Aorta (tissue), 5 donors: ENCODE measurements at regions of chr10 and their contacts with region 1.

Region 1: DNA sequence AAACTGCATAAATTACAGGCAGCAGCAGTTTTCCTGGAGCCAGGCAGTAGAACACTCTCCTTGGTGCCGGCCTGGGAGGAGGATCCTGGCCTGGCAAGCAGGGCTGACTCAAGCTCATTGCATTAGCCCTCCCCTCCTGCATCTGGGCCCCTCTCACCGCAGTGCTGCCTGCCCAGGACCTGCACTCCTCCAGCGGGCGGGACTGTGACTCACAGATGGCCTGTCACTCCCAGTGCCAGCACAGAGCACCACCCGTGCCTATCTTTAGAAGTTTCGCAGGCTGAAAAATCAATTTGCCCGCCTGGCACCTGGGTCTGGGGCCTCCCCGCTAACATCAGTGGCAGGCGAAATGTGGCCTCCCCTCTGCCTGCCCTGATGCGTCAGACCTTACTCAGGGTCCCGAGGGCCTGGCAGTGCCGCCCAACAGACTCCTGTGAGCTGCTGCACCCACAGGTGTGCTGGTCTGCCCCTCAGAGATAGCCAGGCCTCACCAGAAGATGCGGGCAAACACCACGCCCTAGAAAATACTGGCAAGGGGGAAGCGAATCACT is 123.8 kb downstream of the KCNMA1 start:
- DNase-seq: peak; percentile 90 to 94
- ATAC-seq: peak; percentile 78
- H3K4me3 ChIP-seq: no peak overlapping the region
- H3K27ac ChIP-seq: peak overlapping the region; percentile 6 to 72
- H3K4me1 ChIP-seq: peaks cover 6% of the 10 kb centered on the region in 2 donors
- H3K27me3 ChIP-seq: no peaks in the 10 kb centered on the region

Region 2: DNA sequence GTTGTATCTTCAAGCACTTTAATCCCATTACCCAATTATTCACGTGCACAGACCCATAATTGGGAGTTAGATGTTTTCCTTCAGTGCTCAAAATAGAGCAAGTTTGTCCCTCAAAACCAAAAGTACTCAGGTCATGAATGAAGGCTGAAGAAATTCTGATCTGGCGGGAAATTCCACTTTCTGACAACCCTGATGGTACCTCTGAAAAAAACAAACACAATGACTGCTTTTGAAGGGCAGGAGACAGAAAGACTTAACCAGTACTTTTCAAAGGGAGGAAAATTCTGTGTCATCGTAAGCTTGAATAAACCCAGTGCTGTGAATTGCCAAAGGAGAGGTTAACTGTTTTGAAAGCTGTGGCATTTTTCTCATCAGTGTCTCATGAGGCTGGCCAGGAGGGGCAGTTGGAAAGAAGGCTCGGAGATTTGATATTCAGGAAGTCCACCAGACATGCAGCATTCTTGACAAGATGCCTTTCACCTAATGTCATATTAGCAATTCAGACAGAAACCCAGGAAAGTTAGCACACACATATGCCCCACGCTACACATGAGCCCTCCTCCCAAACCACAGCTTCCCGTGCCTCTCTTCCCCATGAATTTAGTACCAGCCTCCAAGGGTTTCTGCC is 223.2 kb before region 1 on chr10:
- intact Hi-C with region 1: no loop called
- DNase-seq: no peak
- ATAC-seq: no peak
- H3K4me3 ChIP-seq: no peak overlapping the region
- H3K27ac ChIP-seq: no peak overlapping the region
- H3K4me1 ChIP-seq: peaks cover 9 to 39% of the 10 kb centered on the region in 2 donors
- H3K27me3 ChIP-seq: no peaks in the 10 kb centered on the region

Region 3: GRCh38 chr10:77629775-77630506 is 116.1 kb after region 1 on chr10:
- intact Hi-C with region 1: loop called (anchors 5 to 10 kb)
- DNase-seq: no peak
- ATAC-seq: no peak
- H3K4me3 ChIP-seq: no peak overlapping the region
- H3K27ac ChIP-seq: no peak overlapping the region
- H3K4me1 ChIP-seq: peaks cover 5 to 14% of the 10 kb centered on the region in 2 donors
- H3K27me3 ChIP-seq: no peaks in the 10 kb centered on the region